GM10248 (cell line): ENCODE measurements at regions of chr11 and their contacts with region 1.

Region 1: GRCh38 chr11:72722050-72722748 is 30.0 kb downstream of the ARAP1 start:
- DNase-seq: peak; percentile 94
- CTCF ChIP-seq: no peak

Region 2: GRCh38 chr11:72781313-72782050 is 59.3 kb after region 1 on chr11:
- CTCF ChIA-PET with region 1: interaction called, 14 read pairs
- POLR2A ChIA-PET with region 1: no interaction called
- DNase-seq: peak; percentile 83
- CTCF ChIP-seq: no peak

Region 3: GRCh38 chr11:72793425-72794367 is 71.5 kb after region 1 on chr11 and contains the start of gene STARD10:
- CTCF ChIA-PET with region 1: interaction called, 76 read pairs
- POLR2A ChIA-PET with region 1: interaction called, 3 read pairs
- DNase-seq: peak; percentile 98
- CTCF ChIP-seq: peak; percentile 84

Region 4: GRCh38 chr11:72831513-72832300 is 109.5 kb after region 1 on chr11:
- CTCF ChIA-PET with region 1: interaction called, 25 read pairs
- POLR2A ChIA-PET with region 1: interaction called, 5 read pairs
- DNase-seq: no peak
- CTCF ChIP-seq: peak; percentile 87

Region 5: GRCh38 chr11:72924568-72925190 is 202.5 kb after region 1 on chr11:
- CTCF ChIA-PET with region 1: no interaction called
- POLR2A ChIA-PET with region 1: no interaction called
- DNase-seq: peak; percentile 31
- CTCF ChIP-seq: peak; percentile 48

Region 6: DNA sequence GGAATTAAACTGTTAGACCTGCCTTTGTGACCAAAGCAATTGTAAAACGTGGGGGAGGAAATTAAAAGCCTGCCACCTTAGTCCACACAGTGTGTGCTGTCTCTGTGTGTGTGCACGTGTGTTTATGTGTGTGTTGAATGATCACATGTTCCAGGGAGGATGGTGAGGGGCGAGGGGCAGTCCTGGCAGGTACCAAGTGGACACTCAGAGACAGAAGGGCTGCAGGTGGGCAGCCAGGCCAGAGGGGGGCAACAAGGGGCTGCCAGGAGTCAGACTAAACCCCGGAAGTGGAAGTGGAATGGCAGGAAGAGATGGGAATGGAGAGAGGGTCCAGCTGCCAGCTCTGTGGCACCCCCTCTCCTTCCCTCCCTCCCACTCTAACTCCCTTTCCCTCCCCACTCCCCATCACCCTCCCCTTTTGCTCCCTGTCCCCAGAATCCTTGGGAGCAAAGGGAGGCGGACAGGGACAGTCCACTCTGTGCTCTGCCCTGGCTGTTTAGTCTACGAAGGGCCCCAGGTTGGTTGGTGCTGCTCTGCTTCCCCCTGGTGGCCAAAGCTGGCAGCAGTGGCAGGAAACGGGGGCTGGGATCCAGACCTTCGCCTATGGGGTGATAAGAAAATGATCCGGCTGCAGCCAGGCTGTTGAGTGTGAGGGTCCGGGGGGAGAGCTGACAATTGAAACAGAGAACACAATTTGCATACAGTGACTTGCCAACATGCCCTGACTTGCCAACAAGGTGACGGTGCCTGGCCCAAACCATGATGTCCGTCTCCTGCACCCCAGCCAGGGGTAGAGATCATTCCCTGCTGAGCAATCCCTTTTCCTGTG is 520.3 kb after region 1 on chr11:
- CTCF ChIA-PET with region 1: interaction called, 10 read pairs
- POLR2A ChIA-PET with region 1: no interaction called
- DNase-seq: peak; percentile 88
- CTCF ChIP-seq: peak; percentile 86